ENCODE measurements at regions of chr3 and their contacts with region 1.

Region 1: GRCh38 chr3:163490119-163490518 is 1588.2 kb downstream of the SI start:
- DNase-seq: peak; percentile 9 to 59 (median 17)
- ATAC-seq: peak; percentile 85
- H3K4me3 ChIP-seq: no peak overlapping the region
- H3K27ac ChIP-seq: no peak overlapping the region
- H3K4me1 ChIP-seq: no peaks in the 10 kb centered on the region; a peak in 1 of 5 replicates
- H3K27me3 ChIP-seq: no peaks in the 10 kb centered on the region
- CTCF ChIP-seq: peak; percentile 52 to 57 (median 56)
- EP300 ChIP-seq: no peak
- POLR2A ChIP-seq: no peak
- RAD21 ChIP-seq: peak in 1 of 2 experiments; percentile 63; a peak in 2 of 4 replicates

Region 2: GRCh38 chr3:163056874-163057497 is 433.1 kb before region 1 on chr3:
- CTCF ChIA-PET with region 1: no interaction called
- POLR2A ChIA-PET with region 1: no interaction called
- in situ Hi-C with region 1: no loop called
- intact Hi-C with region 1: loop called (anchors 5 kb)
- DNase-seq: peak; percentile 22 to 58 (median 26)
- ATAC-seq: peak; percentile 47; the same call in 1 of the 3 replicates
- H3K4me3 ChIP-seq: no peak overlapping the region
- H3K27ac ChIP-seq: no peak overlapping the region
- H3K4me1 ChIP-seq: no peaks in the 10 kb centered on the region
- H3K27me3 ChIP-seq: no peaks in the 10 kb centered on the region
- CTCF ChIP-seq: peak; percentile 16 to 50 (median 35); a peak in 3 of 6 replicates
- EP300 ChIP-seq: no peak
- POLR2A ChIP-seq: no peak
- RAD21 ChIP-seq: peak; percentile 35 to 60; a peak in 3 of 4 replicates

Measured in K562 (cell line).